ENCODE measurements at regions of chr21 and their contacts with region 1.

Region 1: GRCh38 chr21:39183237-39184007 is at the start of gene PSMG1:
- DNase-seq: peak; percentile 88
- ATAC-seq: peak; percentile 94
- H3K4me3 ChIP-seq: peak within 1 kb of the TSS; percentile 80 to 86
- H3K27ac ChIP-seq: peak within 1 kb of the TSS; percentile 64
- H3K4me1 ChIP-seq: peaks cover 4 to 15% of the 10 kb centered on the region in 2 experiments; a peak in 3 of 4 replicates
- H3K27me3 ChIP-seq: no peaks in the 10 kb centered on the region
- CTCF ChIP-seq: no peak
- POLR2A ChIP-seq: peak; percentile 81
- RAD21 ChIP-seq: no peak
- total RNA-seq, gene PSMG1: 83.7 TPM

Region 2: GRCh38 chr21:39379986-39380891 is 196.8 kb after region 1 on chr21:
- CTCF ChIA-PET with region 1: no interaction called
- POLR2A ChIA-PET with region 1: interaction called, 10 read pairs
- RAD21 ChIA-PET with region 1: no interaction called
- intact Hi-C with region 1: loop called (anchors 2 kb)
- DNase-seq: peak; percentile 81
- ATAC-seq: peak; percentile 96
- H3K4me3 ChIP-seq: peak overlapping the region; percentile 78 to 95
- H3K27ac ChIP-seq: peak overlapping the region; percentile 47
- H3K4me1 ChIP-seq: peaks cover 10 to 23% of the 10 kb centered on the region in 2 experiments; a peak in 3 of 4 replicates
- H3K27me3 ChIP-seq: no peaks in the 10 kb centered on the region
- CTCF ChIP-seq: no peak
- POLR2A ChIP-seq: peak; percentile 62
- RAD21 ChIP-seq: no peak

Region 3: GRCh38 chr21:39445321-39446269 is 262.2 kb after region 1 on chr21 and contains the start of gene LCA5L:
- CTCF ChIA-PET with region 1: interaction called, 6 read pairs
- POLR2A ChIA-PET with region 1: no interaction called
- RAD21 ChIA-PET with region 1: interaction called in 1 of 2 experiments, 3 read pairs
- intact Hi-C with region 1: loop called (anchors 10 kb)
- DNase-seq: peak; percentile 70
- ATAC-seq: peak; percentile 90
- H3K4me3 ChIP-seq: peak within 1 kb of the TSS; percentile 73 to 90
- H3K27ac ChIP-seq: peak within 1 kb of the TSS; percentile 74
- H3K4me1 ChIP-seq: peaks cover 10 to 16% of the 10 kb centered on the region in 2 experiments; a peak in 3 of 4 replicates
- H3K27me3 ChIP-seq: no peaks in the 10 kb centered on the region
- CTCF ChIP-seq: no peak
- POLR2A ChIP-seq: peak; percentile 77
- RAD21 ChIP-seq: no peak
- total RNA-seq, gene LCA5L: 1.9 TPM

Region 4: DNA sequence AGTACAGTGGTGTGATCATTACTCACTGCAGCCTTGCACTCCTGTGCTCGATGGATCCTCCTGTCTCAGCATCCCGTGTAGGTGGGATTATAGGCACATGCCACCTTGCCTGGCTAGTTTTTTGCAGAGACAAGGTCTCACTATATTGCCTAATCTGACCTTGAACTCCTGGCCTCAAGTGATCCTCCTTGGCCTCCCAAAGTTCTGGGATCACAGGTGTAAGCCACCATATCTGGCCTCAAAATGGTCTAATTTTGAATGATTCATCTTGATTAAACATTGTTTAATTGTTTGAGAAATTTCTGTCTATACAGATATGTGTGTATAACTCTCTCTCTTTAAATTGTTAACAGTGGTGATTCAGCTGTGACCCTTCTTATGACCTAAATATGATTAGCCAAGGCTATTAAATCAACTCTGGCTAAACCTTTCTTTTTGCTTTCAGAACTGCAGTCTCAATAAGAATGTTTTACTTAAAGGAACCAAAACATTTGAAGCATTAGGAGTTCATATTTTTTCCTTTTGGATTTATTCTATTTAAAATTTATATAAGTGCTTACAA is 410.0 kb after region 1 on chr21:
- CTCF ChIA-PET with region 1: no interaction called
- POLR2A ChIA-PET with region 1: no interaction called
- RAD21 ChIA-PET with region 1: no interaction called
- intact Hi-C with region 1: no loop called
- DNase-seq: no peak
- ATAC-seq: no peak
- H3K4me3 ChIP-seq: no peak overlapping the region
- H3K27ac ChIP-seq: no peak overlapping the region
- H3K4me1 ChIP-seq: no peaks in the 10 kb centered on the region
- H3K27me3 ChIP-seq: no peaks in the 10 kb centered on the region
- CTCF ChIP-seq: no peak
- POLR2A ChIP-seq: no peak
- RAD21 ChIP-seq: no peak

Region 5: DNA sequence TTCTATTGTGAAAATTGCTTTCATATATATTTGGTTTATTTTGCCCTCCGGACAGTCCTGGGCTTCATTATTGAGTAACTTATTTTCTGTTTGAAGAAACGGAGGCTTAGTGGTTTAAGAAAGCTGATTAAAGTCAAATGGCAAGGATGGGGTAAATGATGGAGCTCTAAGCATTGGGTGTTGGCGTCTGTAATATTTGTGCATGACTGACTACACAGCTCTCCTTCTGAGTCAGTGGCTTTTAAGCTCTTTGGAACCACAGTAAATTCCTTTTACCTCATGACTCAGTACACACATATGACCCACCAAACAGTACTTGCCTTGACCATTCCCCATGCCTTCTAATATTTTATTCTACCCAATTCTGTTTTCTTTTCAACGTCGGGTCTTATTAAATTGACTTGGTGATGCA is 450.4 kb after region 1 on chr21:
- CTCF ChIA-PET with region 1: no interaction called
- POLR2A ChIA-PET with region 1: no interaction called
- RAD21 ChIA-PET with region 1: no interaction called
- intact Hi-C with region 1: loop called (anchors 10 kb)
- DNase-seq: peak; percentile 90
- ATAC-seq: peak; percentile 83
- H3K4me3 ChIP-seq: peak overlapping the region; percentile 21 to 32
- H3K27ac ChIP-seq: peak overlapping the region; percentile 62
- H3K4me1 ChIP-seq: peaks cover 41 to 81% of the 10 kb centered on the region in 2 experiments
- H3K27me3 ChIP-seq: no peaks in the 10 kb centered on the region
- CTCF ChIP-seq: no peak
- POLR2A ChIP-seq: no peak
- RAD21 ChIP-seq: no peak

Measured in HCT116 (cell line).